Activated B cell treated with CpG ODN at 0.5 μM for 24 hours (primary cell): ENCODE measurements at regions of chrX and their contacts with region 1.

Region 1: GRCh38 chrX:17046478-17047097 is 100.1 kb downstream of the REPS2 start:
- DNase-seq: peak; percentile 13
- ATAC-seq: no peak
- H3K4me3 Mint-ChIP-seq: no peak overlapping the region
- H3K27ac Mint-ChIP-seq: no peak overlapping the region
- H3K4me1 Mint-ChIP-seq: peaks cover 2% of the 10 kb centered on the region
- H3K27me3 Mint-ChIP-seq: no peaks in the 10 kb centered on the region
- CTCF ChIP-seq: no peak

Region 2: DNA sequence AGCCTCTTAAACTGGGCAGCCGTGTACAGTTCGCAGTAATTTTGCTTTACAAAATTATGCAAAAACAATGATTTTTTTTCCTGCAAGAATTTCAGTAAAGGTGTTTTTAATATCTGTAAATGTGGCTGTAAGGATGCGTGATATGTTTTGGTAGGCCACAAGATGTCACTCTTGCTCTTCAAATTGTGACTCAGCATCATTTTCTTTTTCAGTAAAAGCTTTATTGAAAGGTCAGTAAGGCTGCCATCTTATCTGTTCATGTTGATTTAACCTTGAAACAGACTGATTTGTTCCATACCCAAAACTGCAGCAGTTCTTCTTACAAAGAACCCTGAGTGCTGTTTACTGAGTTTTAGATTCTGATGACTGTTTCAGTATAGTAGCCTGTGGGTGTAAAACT is 220.4 kb before region 1 on chrX:
- CTCF ChIA-PET with region 1: interaction called, 44 read pairs
- POLR2A ChIA-PET with region 1: interaction called, 4 read pairs
- intact Hi-C with region 1: loop called (anchors 1 kb)
- DNase-seq: no peak
- ATAC-seq: no peak
- H3K4me3 Mint-ChIP-seq: no peak overlapping the region
- H3K27ac Mint-ChIP-seq: no peak overlapping the region
- H3K4me1 Mint-ChIP-seq: no peaks in the 10 kb centered on the region
- H3K27me3 Mint-ChIP-seq: no peaks in the 10 kb centered on the region
- CTCF ChIP-seq: no peak

Region 3: GRCh38 chrX:16882702-16883486 is 163.7 kb before region 1 on chrX:
- CTCF ChIA-PET with region 1: interaction called, 65 read pairs
- POLR2A ChIA-PET with region 1: interaction called, 6 read pairs
- intact Hi-C with region 1: loop called (anchors 1 kb)
- DNase-seq: peak; percentile 47
- ATAC-seq: peak; percentile 88
- H3K4me3 Mint-ChIP-seq: peak overlapping the region; percentile 78
- H3K27ac Mint-ChIP-seq: peak overlapping the region; percentile 86
- H3K4me1 Mint-ChIP-seq: peaks cover 20% of the 10 kb centered on the region
- H3K27me3 Mint-ChIP-seq: no peaks in the 10 kb centered on the region
- CTCF ChIP-seq: peak; percentile 46

Region 4: DNA sequence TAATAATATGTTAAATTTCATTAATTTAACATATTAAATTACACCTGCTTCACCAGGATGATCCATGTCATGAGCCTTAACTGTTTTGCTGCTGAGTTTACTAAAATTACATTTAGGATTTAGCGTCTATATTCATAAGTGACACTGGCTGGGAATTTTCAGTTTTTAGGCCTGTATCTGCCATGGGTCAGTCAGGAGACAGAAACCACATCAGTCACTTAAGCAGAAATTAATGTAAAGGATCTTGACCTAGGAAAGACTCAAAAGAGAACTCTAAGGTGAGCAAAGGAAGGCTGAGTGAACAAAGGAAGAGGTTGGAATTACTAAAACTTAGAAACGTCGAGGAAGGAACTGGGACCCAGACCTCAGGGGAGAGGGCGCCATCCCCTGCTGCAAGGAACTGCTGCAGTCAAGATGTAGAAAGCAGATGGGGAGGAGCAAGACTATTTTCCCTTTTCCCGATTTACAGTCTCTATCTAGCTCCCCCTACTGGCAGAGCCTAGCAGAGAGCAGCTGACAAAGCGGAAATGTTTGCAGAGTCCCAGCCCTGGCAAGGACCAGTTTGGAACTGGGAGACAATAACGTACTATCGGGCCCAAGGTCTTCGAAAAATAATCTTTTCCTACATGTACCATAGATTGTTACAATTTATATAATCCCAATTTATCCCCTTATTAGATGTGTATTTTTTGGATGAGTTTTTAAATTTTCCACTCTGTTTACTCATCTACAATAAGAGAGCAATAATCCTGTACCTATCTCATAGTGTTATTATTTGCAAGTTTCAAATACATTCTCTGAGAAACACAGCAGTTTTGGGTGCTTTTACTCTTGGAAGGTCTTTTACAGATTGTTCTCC is 153.9 kb before region 1 on chrX:
- CTCF ChIA-PET with region 1: interaction called, 11 read pairs
- POLR2A ChIA-PET with region 1: interaction called, 3 read pairs
- intact Hi-C with region 1: no loop called
- DNase-seq: no peak
- ATAC-seq: peak; percentile 90
- H3K4me3 Mint-ChIP-seq: no peak overlapping the region
- H3K27ac Mint-ChIP-seq: no peak overlapping the region
- H3K4me1 Mint-ChIP-seq: peaks cover 6% of the 10 kb centered on the region
- H3K27me3 Mint-ChIP-seq: no peaks in the 10 kb centered on the region
- CTCF ChIP-seq: peak; percentile 45

Region 5: DNA sequence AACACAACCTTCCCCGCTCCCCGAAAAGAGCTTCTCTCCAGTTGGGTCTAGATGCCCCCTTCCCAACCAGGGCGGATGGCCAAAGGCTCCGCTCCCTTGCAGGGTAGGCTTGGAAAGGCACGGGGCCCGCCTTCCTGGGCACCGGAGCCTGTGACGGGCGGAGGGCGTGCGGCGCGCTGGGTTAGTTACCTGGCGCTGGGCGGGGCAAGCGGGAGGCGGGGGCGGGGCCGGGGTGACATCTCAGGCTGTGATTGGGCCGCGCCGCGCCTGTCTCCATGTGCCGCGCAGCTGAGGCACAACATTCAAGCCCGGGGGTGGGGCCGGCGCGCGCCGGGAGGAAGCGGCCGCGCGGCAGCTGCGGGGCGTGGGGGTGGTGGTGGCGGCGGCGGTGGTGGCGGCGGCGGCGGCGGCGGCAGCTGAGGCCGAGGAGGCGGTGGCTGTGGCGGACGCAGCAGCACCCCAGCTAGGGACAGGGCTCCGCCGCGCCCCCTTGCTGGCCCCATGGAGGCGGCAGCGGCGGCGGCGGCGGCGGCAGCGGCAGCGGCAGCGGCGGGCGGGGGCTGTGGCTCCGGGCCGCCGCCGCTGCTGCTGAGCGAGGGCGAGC is 100.1 kb before region 1 on chrX and contains the start of gene REPS2:
- CTCF ChIA-PET with region 1: interaction called, 7 read pairs
- POLR2A ChIA-PET with region 1: no interaction called
- intact Hi-C with region 1: loop called (anchors 2 kb)
- DNase-seq: peak; percentile 57
- ATAC-seq: peak; percentile 98
- H3K4me3 Mint-ChIP-seq: peak within 1 kb of the TSS; percentile 86
- H3K27ac Mint-ChIP-seq: peak within 1 kb of the TSS; percentile 59
- H3K4me1 Mint-ChIP-seq: peaks cover 10% of the 10 kb centered on the region
- H3K27me3 Mint-ChIP-seq: no peaks in the 10 kb centered on the region
- CTCF ChIP-seq: no peak
- total RNA-seq, gene REPS2: 1.6 and 2.0 TPM in 2 replicates

Region 6: GRCh38 chrX:17007206-17007683 is 39.3 kb before region 1 on chrX:
- CTCF ChIA-PET with region 1: no interaction called
- POLR2A ChIA-PET with region 1: no interaction called
- intact Hi-C with region 1: loop called (anchors 5 kb)
- DNase-seq: no peak
- ATAC-seq: no peak
- H3K4me3 Mint-ChIP-seq: no peak overlapping the region
- H3K27ac Mint-ChIP-seq: no peak overlapping the region
- H3K4me1 Mint-ChIP-seq: no peaks in the 10 kb centered on the region
- H3K27me3 Mint-ChIP-seq: no peaks in the 10 kb centered on the region
- CTCF ChIP-seq: no peak